B cell (primary cell): ENCODE measurements at regions of chr6 and their contacts with region 1.

Region 1: GRCh38 chr6:89829591-89830385 is at the start of gene CASP8AP2:
- DNase-seq: peak; percentile 98
- ATAC-seq: peak; percentile 93
- H3K4me3 ChIP-seq: peak within 1 kb of the TSS; percentile 75 to 97 (median 79)
- H3K4me3 Mint-ChIP-seq: peak within 1 kb of the TSS; percentile 99
- H3K27ac ChIP-seq: peak within 1 kb of the TSS; percentile 62 to 83
- H3K27ac Mint-ChIP-seq: peak within 1 kb of the TSS; percentile 95
- H3K4me1 ChIP-seq: peaks cover 14 to 28% of the 10 kb centered on the region in 2 donors
- H3K4me1 Mint-ChIP-seq: peaks cover 29% of the 10 kb centered on the region
- H3K27me3 ChIP-seq: no peaks in the 10 kb centered on the region
- H3K27me3 Mint-ChIP-seq: no peaks in the 10 kb centered on the region
- CTCF ChIP-seq: no peak
- total RNA-seq, gene CASP8AP2: 30.6 and 32.1 TPM in 2 replicates

Region 2: DNA sequence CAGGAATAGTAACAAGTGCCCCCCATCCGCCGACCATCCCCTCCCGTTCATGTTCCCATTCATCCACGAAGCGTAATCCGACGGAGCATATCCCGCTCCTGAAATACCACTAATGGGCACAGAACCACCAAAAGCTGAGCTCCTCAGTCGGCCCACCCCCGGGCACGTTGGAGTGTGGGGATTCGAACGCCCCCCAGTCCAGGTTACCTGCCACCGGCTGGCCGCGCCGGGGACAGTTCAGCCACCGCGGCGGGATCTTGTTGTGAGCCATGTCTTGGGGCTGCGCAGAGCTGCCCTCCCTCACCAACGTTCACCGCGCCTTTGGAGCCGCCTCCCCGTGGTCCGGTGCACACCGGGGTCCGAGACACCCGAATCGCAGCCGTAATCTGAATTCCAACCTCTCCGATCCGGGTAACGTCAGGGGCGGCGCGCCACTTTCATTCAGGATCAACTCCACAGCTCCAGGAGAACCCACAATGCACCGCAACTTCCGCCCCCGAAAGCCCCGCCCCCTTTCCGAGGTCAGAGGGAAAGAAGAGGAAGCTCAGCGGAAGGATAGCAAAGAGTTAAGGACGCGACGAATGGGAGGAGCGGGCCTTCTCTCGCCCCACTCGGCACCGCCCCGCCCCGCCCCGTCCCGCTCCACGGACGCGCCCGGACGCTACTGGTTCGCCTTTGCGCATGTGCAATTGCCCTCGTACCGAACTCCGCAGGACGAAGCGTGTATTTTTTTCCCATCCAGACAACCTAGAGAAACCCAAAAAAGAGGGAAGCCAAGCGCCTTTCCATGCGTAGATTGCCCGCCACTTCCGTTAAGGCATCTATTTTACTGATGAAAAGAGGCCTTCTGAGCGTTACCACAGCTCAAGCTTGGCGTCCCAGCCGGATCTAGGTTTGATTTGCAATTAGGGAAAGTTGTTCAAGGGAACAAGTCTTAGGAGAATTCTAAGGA is 866.4 kb before region 1 on chr6 and contains the start of gene RNGTT:
- CTCF ChIA-PET with region 1: no interaction called
- POLR2A ChIA-PET with region 1: no interaction called
- intact Hi-C with region 1: loop called (anchors 5 kb)
- DNase-seq: peak; percentile 97
- ATAC-seq: peak; percentile 100
- H3K4me3 ChIP-seq: peak within 1 kb of the TSS; percentile 92 to 94 (median 94)
- H3K4me3 Mint-ChIP-seq: peak within 1 kb of the TSS; percentile 98
- H3K27ac ChIP-seq: peak within 1 kb of the TSS; percentile 64 to 87
- H3K27ac Mint-ChIP-seq: peak within 1 kb of the TSS; percentile 96
- H3K4me1 ChIP-seq: peaks cover 10 to 17% of the 10 kb centered on the region in 2 donors
- H3K4me1 Mint-ChIP-seq: peaks cover 34% of the 10 kb centered on the region
- H3K27me3 ChIP-seq: no peaks in the 10 kb centered on the region
- H3K27me3 Mint-ChIP-seq: no peaks in the 10 kb centered on the region
- CTCF ChIP-seq: no peak
- total RNA-seq, gene RNGTT: 29.1 and 34.0 TPM in 2 replicates

Region 3: DNA sequence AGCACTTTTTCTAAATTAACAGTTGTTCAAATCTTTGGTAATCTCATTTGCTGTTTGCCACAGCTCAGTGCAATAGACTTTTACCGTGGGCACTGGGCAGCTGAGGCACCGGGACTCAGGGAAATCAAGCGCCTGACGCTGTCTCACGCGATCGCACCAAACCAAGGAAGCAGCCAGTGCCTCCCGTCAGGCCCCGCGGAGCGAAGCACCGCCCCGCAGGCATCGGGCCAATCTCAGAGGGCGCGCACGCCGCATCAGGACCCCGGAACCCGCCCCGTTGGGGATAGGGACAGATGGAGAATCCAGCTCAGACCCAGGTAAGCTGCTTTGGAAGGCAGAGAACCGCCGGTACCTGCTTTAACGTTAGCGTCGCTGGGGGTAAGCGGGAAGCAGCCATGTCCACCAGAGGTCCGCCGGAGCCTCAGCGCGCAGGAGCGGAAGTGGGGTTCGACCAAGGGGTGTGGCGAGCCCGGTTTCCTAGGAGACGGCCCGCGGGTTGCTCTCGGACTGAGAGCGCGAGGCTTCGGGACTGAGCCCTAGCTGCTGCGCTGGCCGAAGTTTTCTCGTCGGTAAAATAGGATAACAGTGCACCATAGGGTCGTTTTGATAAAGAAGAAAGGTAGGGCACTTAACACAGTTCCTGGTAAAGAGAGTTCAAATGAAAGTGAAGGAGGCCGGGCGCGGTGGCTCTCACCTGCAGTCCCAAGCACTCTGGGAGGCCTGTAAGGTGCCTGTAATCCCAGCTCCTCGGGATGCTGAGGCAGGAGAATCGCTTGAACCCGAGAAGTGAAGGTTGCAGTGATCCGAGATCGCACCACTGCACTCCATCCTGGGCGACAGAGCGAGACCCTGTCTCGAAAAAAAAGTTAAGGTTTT is 191.2 kb before region 1 on chr6 and contains the start of gene LYRM2:
- CTCF ChIA-PET with region 1: no interaction called
- POLR2A ChIA-PET with region 1: no interaction called
- intact Hi-C with region 1: loop called (anchors 2 kb)
- DNase-seq: peak; percentile 96
- ATAC-seq: peak; percentile 94
- H3K4me3 ChIP-seq: peak within 1 kb of the TSS; percentile 56 to 84 (median 79)
- H3K4me3 Mint-ChIP-seq: peak within 1 kb of the TSS; percentile 92
- H3K27ac ChIP-seq: peak within 1 kb of the TSS; percentile 91 to 99
- H3K27ac Mint-ChIP-seq: peak within 1 kb of the TSS; percentile 98
- H3K4me1 ChIP-seq: peaks cover 13 to 15% of the 10 kb centered on the region in 2 donors
- H3K4me1 Mint-ChIP-seq: peaks cover 28% of the 10 kb centered on the region
- H3K27me3 ChIP-seq: no peaks in the 10 kb centered on the region
- H3K27me3 Mint-ChIP-seq: no peaks in the 10 kb centered on the region
- CTCF ChIP-seq: no peak
- total RNA-seq, gene LYRM2: 31.4 and 33.7 TPM in 2 replicates

Region 4: DNA sequence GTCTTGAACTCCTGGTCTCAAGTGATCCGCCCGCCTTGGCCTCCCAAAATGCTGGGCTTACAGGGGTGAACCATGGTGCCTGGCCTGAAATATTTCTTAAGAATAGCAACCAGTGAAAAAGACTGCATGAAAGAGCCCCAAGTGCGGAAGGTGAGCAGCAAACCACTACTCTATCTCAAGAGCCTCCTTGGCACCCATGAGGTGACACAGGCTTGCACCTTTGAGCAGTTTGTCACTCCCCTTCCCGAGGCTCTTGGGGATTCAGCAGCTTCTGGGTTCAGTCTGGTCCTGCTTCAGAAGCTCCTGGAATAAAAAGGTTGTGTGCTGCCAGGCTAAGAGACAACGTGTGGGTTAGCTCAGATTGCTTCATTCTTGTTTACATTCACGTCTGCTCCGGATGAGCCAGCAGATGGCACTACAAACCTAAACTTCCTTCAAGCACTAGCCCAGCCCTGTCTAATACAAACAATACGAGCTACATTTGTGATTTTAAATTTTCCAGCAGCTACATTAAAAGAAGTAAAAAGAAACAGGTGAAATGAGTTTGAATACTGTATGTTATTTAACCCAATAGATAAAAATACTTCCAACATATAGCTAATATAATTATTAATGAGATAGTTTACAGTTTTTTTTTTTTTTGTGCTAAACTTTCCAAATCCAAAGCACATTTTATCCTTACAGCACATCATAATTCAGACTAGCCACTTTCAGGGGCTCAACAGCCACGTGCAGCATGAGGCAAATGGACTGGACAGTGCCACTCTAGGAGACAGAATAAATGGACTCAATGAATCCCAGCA is 110.6 kb after region 1 on chr6:
- CTCF ChIA-PET with region 1: no interaction called
- POLR2A ChIA-PET with region 1: interaction called, 3 read pairs
- intact Hi-C with region 1: loop called (anchors 10 kb)
- DNase-seq: peak; percentile 68
- ATAC-seq: peak; percentile 81
- H3K4me3 ChIP-seq: no peak overlapping the region
- H3K4me3 Mint-ChIP-seq: no peak overlapping the region
- H3K27ac ChIP-seq: no peak overlapping the region
- H3K27ac Mint-ChIP-seq: peak overlapping the region; percentile 64
- H3K4me1 ChIP-seq: no peaks in the 10 kb centered on the region
- H3K4me1 Mint-ChIP-seq: peaks cover 7% of the 10 kb centered on the region
- H3K27me3 ChIP-seq: no peaks in the 10 kb centered on the region
- H3K27me3 Mint-ChIP-seq: no peaks in the 10 kb centered on the region
- CTCF ChIP-seq: peak; percentile 79

Region 5: DNA sequence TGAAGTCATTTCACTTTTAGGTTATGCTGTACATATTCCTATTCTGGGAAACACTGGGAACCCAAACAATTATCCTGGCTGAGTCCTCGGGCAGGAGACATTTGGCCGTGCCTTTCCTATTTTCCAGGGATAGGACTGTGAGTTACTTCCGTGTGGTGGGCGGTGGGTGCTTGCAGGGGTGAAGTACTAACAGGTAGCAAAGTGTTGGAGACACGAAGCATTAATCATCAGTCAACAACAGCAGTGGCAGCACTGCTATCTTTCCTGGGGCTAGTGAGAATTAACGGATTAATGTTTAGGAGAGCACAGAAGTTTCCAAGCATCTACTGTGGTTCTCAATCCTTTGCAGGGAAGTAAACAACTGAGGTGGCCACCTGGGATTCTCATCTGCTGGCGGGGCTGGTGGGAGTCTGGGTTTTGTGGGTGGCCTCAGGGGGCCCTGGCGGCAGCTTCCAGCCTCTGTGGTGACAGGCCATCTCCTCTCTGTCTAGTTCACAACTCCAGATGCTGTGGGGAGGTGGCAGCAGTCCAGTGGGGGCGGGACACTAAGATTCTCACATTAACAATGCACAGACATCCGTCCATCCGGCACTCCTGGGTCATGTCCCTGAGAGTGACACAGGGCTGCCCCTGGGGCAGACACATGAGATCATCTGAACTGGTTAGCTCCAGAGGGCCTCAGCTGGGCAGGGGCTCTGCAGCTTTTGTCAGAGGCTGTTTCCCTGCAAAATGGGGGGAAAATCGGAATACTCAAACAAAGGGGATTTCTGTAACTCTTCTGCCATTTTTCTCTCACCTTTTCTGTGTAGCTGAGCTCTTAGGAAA is 155.3 kb after region 1 on chr6:
- CTCF ChIA-PET with region 1: no interaction called
- POLR2A ChIA-PET with region 1: no interaction called
- intact Hi-C with region 1: no loop called
- DNase-seq: no peak
- ATAC-seq: no peak
- H3K4me3 ChIP-seq: no peak overlapping the region
- H3K4me3 Mint-ChIP-seq: no peak overlapping the region
- H3K27ac ChIP-seq: peak overlapping the region in 1 of 2 donors; percentile 52
- H3K27ac Mint-ChIP-seq: peak overlapping the region; percentile 32
- H3K4me1 ChIP-seq: peaks cover 0 to 3% of the 10 kb centered on the region in 2 donors
- H3K4me1 Mint-ChIP-seq: peaks cover 16% of the 10 kb centered on the region
- H3K27me3 ChIP-seq: no peaks in the 10 kb centered on the region
- H3K27me3 Mint-ChIP-seq: no peaks in the 10 kb centered on the region
- CTCF ChIP-seq: no peak

Region 6: DNA sequence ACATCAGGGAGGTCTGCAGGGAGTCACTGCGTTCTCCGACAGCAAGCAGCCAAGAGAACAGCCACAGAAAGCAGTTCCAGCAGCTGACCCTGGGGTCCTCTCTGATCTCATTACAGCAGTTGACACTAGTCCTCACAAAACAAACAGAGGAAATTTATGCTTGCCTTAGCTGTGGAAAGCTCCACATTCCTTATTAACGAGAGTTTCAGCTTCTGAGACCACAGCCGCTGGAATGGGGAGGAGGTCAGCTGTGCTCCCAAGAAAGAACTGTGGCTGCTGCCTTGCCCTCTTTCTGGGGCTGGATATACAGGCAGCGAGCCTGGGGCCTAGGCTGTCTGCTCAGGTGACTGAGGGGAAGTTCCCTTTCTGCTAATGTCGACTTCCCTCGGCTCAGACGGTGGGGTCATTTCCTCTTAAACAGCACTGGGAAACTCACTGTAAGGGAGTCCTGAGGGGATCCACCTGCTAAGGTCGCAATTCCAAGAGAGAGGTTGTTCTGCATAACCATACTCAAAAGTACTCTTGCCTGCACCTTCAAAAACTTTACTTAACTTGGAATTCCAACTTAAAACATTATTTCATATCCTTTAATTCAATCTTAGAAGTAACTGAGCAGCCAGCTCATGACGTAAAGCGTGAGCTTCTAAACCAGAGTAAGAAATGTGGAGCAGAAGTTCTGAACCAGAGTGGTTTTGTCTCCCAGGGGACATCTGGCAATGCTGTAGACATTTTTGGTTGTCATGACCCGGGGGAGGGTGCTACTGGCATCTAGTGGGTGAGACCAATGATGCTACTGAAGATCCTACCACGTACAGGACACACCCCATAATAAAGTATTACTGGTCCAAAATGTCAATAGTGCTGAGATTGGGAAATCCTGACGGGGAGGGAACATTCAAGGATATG is 386.5 kb after region 1 on chr6:
- CTCF ChIA-PET with region 1: interaction called, 3 read pairs
- POLR2A ChIA-PET with region 1: interaction called, 4 read pairs
- intact Hi-C with region 1: loop called (anchors 10 kb)
- DNase-seq: peak; percentile 95
- ATAC-seq: peak; percentile 84
- H3K4me3 ChIP-seq: no peak overlapping the region
- H3K4me3 Mint-ChIP-seq: peak overlapping the region; percentile 73
- H3K27ac ChIP-seq: peak overlapping the region; percentile 85 to 96
- H3K27ac Mint-ChIP-seq: no peak overlapping the region
- H3K4me1 ChIP-seq: peaks cover 83 to 84% of the 10 kb centered on the region in 2 donors
- H3K4me1 Mint-ChIP-seq: peaks cover 28% of the 10 kb centered on the region
- H3K27me3 ChIP-seq: no peaks in the 10 kb centered on the region
- H3K27me3 Mint-ChIP-seq: no peaks in the 10 kb centered on the region
- CTCF ChIP-seq: peak; percentile 63

Region 7: DNA sequence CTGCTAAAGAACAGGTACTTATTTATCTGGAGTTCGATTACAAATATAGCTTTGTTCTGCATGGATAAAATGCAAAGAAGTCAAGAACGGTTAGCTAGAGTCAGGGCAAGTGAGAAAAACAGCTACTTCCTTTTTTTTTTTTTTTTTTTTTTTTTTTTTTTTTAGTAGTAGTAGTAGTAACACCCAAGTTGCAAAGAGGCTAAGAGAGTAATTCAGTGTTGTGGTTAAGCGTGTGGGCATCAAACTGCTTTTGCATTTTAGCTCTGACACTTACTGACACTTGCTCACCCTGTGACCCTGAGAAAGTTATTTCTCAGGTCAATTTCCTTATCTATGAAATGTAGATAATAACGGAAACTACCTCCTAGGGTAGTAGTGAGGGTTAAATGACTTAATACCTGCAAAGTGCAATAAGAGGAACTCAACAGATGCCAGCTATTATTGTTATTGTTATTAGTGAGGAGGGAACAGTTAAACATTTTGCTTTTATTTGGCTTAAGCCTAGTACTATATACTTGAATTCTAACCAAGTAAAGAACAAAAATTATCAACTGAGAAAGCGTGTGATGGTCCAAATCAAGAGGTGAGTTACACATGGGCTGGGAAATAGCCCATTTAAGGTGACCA is 553.5 kb after region 1 on chr6:
- CTCF ChIA-PET with region 1: no interaction called
- POLR2A ChIA-PET with region 1: no interaction called
- intact Hi-C with region 1: loop called (anchors 10 kb)
- DNase-seq: peak; percentile 86
- ATAC-seq: peak; percentile 84
- H3K4me3 ChIP-seq: peak overlapping the region in 2 of 5 experiments; percentile 19 to 50
- H3K4me3 Mint-ChIP-seq: peak overlapping the region; percentile 78
- H3K27ac ChIP-seq: peak overlapping the region; percentile 65 to 93
- H3K27ac Mint-ChIP-seq: peak overlapping the region; percentile 92
- H3K4me1 ChIP-seq: peaks cover 72 to 74% of the 10 kb centered on the region in 2 donors
- H3K4me1 Mint-ChIP-seq: peaks cover 79% of the 10 kb centered on the region
- H3K27me3 ChIP-seq: no peaks in the 10 kb centered on the region
- H3K27me3 Mint-ChIP-seq: no peaks in the 10 kb centered on the region
- CTCF ChIP-seq: no peak